Caco-2 (cell line): ENCODE measurements at regions of chr7 and their contacts with region 1.

Region 1: DNA sequence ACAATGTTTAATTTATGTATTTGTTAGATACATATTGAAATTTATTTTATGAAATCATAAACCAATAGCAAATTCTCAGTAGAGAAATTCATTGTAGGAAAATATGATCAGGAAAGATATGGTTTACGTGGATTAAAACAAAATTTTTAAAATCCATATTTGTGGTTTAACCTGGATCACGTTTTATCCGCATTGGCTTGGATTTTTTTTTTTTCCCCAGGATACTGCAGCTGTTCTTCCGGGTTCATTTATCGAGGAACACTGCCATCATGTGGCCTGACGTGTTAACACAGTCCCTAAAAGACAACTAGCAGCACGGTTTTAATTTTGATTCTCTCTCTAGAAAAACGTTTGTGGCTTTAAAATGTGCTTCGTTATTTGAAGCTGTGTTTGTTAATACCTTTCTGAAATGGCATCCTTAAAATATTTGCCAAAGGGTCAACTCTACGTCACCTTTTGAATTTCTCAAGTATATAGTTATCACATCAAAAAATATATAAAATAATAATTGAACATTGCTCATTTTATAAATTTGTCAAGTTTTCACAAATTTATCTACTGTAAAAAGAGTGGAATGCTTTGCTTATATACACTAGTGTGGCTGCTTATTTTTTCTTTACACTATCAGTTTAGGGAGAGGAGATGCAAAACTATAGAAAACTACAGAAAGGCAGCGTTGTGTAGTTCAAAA is 8.7 kb upstream of the ASB4 start:
- DNase-seq: peak; percentile 74
- H3K4me3 ChIP-seq: no peak overlapping the region
- H3K4me3 Mint-ChIP-seq: no peak overlapping the region
- H3K27ac Mint-ChIP-seq: no peak overlapping the region
- H3K4me1 ChIP-seq: peaks cover 20% of the 10 kb centered on the region
- H3K4me1 Mint-ChIP-seq: peaks cover 11% of the 10 kb centered on the region
- H3K27me3 ChIP-seq: no peaks in the 10 kb centered on the region
- H3K27me3 Mint-ChIP-seq: no peaks in the 10 kb centered on the region
- CTCF ChIP-seq: peak; percentile 71 to 82

Region 2: DNA sequence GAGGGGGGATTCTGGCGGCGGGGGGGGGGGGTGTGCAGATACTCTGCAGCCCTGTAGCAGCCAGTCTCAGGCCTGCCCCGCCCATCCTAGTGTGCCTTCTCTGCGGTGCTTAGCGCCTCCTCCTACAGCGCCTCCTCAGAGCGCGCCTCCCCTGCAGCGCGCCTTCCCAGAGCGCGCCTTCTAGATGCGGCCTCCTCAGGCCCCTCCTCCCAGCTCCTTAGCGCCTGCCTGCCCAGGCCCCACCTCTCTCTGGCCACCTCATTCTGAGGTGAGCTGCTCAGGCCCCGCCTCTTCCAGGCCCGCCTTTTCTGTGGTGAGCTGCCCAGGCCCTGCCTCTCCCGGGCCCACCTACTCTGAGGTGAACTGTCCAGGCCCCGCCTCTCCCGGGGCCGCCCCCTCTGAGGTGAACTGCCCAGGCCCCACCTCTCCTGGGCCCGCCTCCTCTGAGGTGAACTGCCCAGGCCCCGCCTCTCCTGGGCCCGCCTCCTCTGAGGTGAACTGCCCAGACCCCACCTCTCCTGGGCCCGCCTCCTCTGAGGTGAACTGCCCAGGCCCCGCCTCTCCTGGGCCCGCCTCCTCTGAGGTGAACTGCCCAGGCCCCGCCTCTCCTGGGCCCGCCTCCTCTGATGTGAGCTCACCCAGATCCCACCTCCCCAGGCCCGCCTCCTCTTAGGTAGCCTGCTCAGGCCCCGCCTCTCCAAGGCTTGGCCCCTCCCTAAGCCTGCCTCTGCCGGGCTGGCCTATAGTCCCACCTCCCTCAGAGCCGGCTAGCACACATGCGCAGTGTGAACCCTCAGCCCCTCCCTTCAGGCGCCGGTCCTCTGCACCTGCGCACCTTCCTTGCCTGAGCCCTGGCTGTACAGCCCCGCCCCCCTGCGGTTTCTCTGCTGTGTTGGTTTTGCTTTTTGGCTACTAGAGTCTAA is 819.0 kb before region 1 on chr7:
- CTCF ChIA-PET with region 1: interaction called, 3 read pairs
- POLR2A ChIA-PET with region 1: no interaction called
- intact Hi-C with region 1: loop called (anchors 5 kb)
- DNase-seq: peak; percentile 100
- H3K4me3 ChIP-seq: peak overlapping the region; percentile 79
- H3K4me3 Mint-ChIP-seq: peak overlapping the region; percentile 88
- H3K27ac Mint-ChIP-seq: peak overlapping the region; percentile 72
- H3K4me1 ChIP-seq: no peaks in the 10 kb centered on the region
- H3K4me1 Mint-ChIP-seq: peaks cover 6% of the 10 kb centered on the region
- H3K27me3 ChIP-seq: no peaks in the 10 kb centered on the region
- H3K27me3 Mint-ChIP-seq: no peaks in the 10 kb centered on the region
- CTCF ChIP-seq: peak in 1 of 2 experiments; percentile 27

Region 3: DNA sequence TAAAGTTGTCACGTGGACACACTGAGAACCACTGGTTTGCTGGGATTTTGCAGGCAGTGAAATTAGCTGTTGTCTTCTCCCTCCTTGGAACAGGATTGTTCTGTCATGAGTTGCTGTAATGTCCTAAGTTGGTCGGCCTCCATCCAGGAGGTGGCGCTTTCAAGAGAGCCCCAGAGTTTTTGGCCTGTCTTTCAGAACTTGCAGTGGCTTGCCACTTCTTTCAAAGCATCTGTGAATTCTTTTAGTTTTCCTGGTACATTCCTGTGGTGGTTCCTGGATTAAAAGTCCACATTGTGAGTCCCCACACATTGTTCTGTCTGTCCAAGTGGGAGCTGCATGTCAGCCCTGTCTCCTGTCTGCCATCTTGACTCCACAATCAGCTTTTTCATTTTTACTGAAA is 286.5 kb before region 1 on chr7:
- CTCF ChIA-PET with region 1: no interaction called
- POLR2A ChIA-PET with region 1: no interaction called
- intact Hi-C with region 1: loop called (anchors 1 kb)
- DNase-seq: peak in 1 of 2 experiments; percentile 29
- H3K4me3 ChIP-seq: no peak overlapping the region
- H3K4me3 Mint-ChIP-seq: no peak overlapping the region
- H3K27ac Mint-ChIP-seq: no peak overlapping the region
- H3K4me1 ChIP-seq: no peaks in the 10 kb centered on the region
- H3K4me1 Mint-ChIP-seq: no peaks in the 10 kb centered on the region
- H3K27me3 ChIP-seq: no peaks in the 10 kb centered on the region
- H3K27me3 Mint-ChIP-seq: no peaks in the 10 kb centered on the region
- CTCF ChIP-seq: peak; percentile 10 to 15

Region 4: DNA sequence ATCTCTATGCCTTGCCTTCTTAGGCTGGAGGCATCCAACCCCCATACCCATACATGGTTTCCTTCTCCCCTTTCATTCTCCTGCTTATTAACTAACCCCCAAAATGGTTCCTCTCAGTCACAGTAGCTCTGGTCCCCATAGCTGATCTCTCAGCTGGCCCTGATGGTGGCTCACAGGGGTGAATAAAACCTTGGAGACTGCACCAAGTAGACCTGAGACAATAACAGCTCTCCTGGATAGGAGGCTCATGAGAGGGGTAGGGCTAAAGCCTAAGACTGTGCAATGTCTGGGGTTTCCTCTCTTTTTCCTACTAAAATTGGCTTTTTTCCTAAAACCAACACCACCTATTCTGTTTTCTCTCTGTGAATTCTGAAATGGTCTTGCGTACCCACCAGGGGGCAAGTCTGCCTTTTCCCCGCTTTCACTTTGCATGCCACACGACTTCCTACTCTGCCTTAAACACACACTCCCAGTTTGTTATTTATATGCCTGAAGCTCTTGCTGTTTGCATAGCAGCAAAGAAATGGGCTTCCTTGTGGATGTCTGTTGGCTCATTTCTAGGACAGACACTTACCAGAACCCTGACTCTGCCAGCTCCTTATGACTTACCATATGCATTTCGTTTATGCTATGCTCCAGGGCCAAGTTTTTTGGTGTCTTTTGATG is 134.3 kb before region 1 on chr7:
- CTCF ChIA-PET with region 1: interaction called, 6 read pairs
- POLR2A ChIA-PET with region 1: no interaction called
- intact Hi-C with region 1: loop called (anchors 1 kb)
- DNase-seq: peak in 1 of 2 experiments; percentile 34
- H3K4me3 ChIP-seq: no peak overlapping the region
- H3K4me3 Mint-ChIP-seq: no peak overlapping the region
- H3K27ac Mint-ChIP-seq: no peak overlapping the region
- H3K4me1 ChIP-seq: no peaks in the 10 kb centered on the region
- H3K4me1 Mint-ChIP-seq: no peaks in the 10 kb centered on the region
- H3K27me3 ChIP-seq: no peaks in the 10 kb centered on the region
- H3K27me3 Mint-ChIP-seq: no peaks in the 10 kb centered on the region
- CTCF ChIP-seq: peak; percentile 16 to 26

Region 5: DNA sequence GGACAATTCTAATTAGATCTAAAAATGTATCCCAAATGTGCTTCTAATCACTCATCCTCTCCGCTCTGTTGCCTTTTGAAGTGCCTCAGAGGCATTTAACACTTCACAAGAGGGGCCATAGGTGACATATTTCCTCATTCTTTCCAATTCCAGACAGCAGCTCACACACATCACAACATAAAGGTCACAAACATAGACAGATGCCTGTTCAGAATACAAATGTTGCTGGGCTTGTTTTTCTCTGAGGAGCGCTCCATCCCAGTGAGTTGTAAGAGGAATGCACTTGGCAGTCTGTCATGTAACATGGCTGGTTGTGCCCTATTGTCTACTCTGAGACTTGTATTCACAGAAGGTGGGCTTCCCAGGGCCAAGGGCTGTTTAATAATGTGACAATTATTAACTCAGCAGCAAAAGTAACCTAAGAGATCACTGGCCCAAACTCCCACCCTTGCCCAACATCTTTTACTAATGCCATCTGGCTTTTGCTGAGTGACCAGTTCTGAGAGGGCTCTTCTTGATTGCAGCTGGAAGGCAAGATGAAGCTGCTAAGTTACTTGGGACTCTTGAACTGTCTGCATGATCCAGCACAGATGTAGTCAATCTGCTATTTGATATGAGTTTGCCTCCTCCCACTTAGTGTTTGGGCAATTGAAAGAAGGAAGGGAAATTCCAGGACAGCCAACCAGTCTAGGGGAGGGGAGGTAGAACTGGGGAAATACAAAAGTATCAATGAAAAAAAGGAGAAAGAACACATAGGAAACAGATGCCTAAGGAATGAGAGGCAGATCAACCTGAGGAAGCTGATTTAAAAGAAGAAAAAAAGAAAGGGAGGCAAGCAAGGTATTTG is 55.8 kb before region 1 on chr7:
- CTCF ChIA-PET with region 1: interaction called, 3 read pairs
- POLR2A ChIA-PET with region 1: no interaction called
- intact Hi-C with region 1: loop called (anchors 2 kb)
- DNase-seq: peak in 1 of 2 experiments; percentile 32
- H3K4me3 ChIP-seq: no peak overlapping the region
- H3K4me3 Mint-ChIP-seq: peak overlapping the region; percentile 23
- H3K27ac Mint-ChIP-seq: peak overlapping the region; percentile 59
- H3K4me1 ChIP-seq: peaks cover 26% of the 10 kb centered on the region
- H3K4me1 Mint-ChIP-seq: peaks cover 24% of the 10 kb centered on the region
- H3K27me3 ChIP-seq: no peaks in the 10 kb centered on the region
- H3K27me3 Mint-ChIP-seq: no peaks in the 10 kb centered on the region
- CTCF ChIP-seq: no peak

Region 6: DNA sequence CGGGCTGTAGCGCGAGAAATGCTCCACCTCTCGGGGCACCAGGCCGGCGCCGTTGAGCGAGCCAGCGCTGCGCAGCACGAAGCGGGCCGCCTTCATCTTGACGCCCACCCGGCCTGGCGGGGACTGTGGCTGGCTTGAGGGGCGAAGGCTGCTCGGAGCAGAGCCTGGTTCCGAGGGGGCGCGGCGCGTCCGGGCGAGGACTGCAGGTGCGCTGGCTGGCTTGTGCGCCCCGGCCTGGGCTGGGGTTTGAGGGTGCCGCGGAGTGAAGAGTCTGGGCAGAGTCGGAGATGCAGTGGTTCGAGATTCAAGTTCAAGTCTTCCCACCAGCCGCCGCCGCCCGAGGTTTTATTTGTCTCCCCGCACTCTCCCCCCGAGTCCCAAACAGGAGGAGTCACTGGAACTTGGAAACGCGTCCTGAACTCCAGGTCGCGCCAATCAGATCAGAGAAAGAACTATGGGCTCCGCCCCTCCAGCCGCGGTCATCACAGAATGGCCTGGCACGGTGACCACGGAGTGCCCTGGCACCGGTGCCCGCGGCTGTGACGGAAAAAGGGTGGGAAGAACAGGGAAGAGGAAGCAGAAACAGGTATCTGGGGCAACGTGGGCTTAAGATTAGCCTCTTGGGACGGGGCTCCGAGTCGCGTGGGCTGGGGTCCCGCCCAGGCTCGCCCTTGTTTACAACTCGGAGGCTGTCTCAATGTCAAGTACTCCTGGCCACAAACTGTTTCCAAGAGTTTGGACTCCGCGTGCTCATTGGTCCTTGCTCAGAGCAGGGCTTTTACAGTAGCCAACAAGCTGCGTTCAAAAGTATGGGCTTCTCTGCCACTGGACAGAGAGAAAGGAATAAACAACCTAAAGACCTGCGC is 119.4 kb after region 1 on chr7 and contains the start of gene PDK4:
- CTCF ChIA-PET with region 1: no interaction called
- POLR2A ChIA-PET with region 1: no interaction called
- intact Hi-C with region 1: no loop called
- DNase-seq: peak; percentile 47
- H3K4me3 ChIP-seq: peak within 1 kb of the TSS; percentile 52
- H3K4me3 Mint-ChIP-seq: peak within 1 kb of the TSS; percentile 78
- H3K27ac Mint-ChIP-seq: no peak within 1 kb of the TSS
- H3K4me1 ChIP-seq: no peaks in the 10 kb centered on the region
- H3K4me1 Mint-ChIP-seq: peaks cover 6% of the 10 kb centered on the region
- H3K27me3 ChIP-seq: no peaks in the 10 kb centered on the region; the same call in 1 of the 2 replicates
- H3K27me3 Mint-ChIP-seq: peaks cover 17% of the 10 kb centered on the region
- CTCF ChIP-seq: no peak
- total RNA-seq, gene PDK4: 0.12 and 0.20 TPM in 2 replicates